Heart left ventricle (tissue), 16 donors: ENCODE measurements at regions of chr7 and their contacts with region 1.

Region 1: DNA sequence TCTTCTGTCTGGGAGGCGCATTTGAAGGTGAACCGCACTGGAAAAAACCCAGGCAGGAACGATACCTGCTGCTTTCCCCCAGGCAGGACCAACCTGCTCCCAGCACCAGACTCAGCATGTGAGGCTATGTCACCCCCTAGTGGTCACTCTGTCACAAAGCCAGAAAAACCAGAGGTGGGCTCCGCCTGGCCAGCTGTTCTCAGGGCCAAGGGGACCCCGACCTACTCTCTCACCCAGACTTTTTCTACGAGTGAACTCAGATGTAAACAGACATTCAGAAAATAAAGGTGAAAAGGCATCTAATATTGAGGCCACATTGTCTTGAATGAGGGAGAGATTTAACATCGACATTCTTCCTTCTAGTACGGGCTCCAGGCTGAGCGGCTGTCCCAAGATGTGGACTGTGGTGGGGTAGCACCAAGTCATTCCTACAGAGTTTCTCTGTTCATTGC is 117.3 kb downstream of the PRKAG2 start:
- DNase-seq: peak in 2 of 5 donors; percentile 60 to 67
- ATAC-seq: peak in 3 of 4 donors; percentile 51 to 55 (median 53)
- H3K4me3 ChIP-seq: no peak overlapping the region
- H3K27ac ChIP-seq: no peak overlapping the region
- H3K4me1 ChIP-seq: peaks cover 0 to 32% (median 15%) of the 10 kb centered on the region in 12 donors
- H3K27me3 ChIP-seq: no peaks in the 10 kb centered on the region
- CTCF ChIP-seq: peak; percentile 80 to 92 (median 88)
- POLR2A ChIP-seq: no peak

Region 2: GRCh38 chr7:151315038-151315655 is 444.5 kb before region 1 on chr7:
- intact Hi-C with region 1: loop called in 1 of 10 experiments (anchors 5 kb)
- DNase-seq: peak in 4 of 5 donors; percentile 62 to 74 (median 66)
- ATAC-seq: peak in 3 of 4 donors; percentile 53 to 84 (median 84)
- H3K4me3 ChIP-seq: peak overlapping the region in 1 of 12 donors; percentile 1
- H3K27ac ChIP-seq: no peak overlapping the region
- H3K4me1 ChIP-seq: peaks cover 0 to 15% (median 6%) of the 10 kb centered on the region in 12 donors
- H3K27me3 ChIP-seq: no peaks in the 10 kb centered on the region
- CTCF ChIP-seq: peak; percentile 73 to 92 (median 80)
- POLR2A ChIP-seq: no peak

Region 3: GRCh38 chr7:151459726-151460473 is 299.7 kb before region 1 on chr7:
- intact Hi-C with region 1: loop called in 5 of 10 experiments (anchors 5 to 10 kb)
- DNase-seq: peak; percentile 73 to 91 (median 78)
- ATAC-seq: peak; percentile 88 to 90 (median 90)
- H3K4me3 ChIP-seq: peak overlapping the region in 9 of 12 donors; percentile 20 to 40 (median 27)
- H3K27ac ChIP-seq: peak overlapping the region; percentile 65 to 97 (median 92)
- H3K4me1 ChIP-seq: peaks cover 3 to 34% (median 22%) of the 10 kb centered on the region in 12 donors
- H3K27me3 ChIP-seq: no peaks in the 10 kb centered on the region
- CTCF ChIP-seq: peak in 8 of 12 donors; percentile 5 to 50 (median 28)
- POLR2A ChIP-seq: peak in 1 of 2 donors; percentile 13

Region 4: GRCh38 chr7:151570366-151570915 is 189.2 kb before region 1 on chr7:
- intact Hi-C with region 1: loop called in 9 of 10 experiments (anchors 2 to 5 kb)
- DNase-seq: no peak
- ATAC-seq: no peak
- H3K4me3 ChIP-seq: no peak overlapping the region
- H3K27ac ChIP-seq: no peak overlapping the region
- H3K4me1 ChIP-seq: peaks cover 0 to 14% (median 6%) of the 10 kb centered on the region in 12 donors
- H3K27me3 ChIP-seq: no peaks in the 10 kb centered on the region
- CTCF ChIP-seq: peak in 11 of 12 donors; percentile 22 to 65 (median 44)
- POLR2A ChIP-seq: no peak

Region 5: GRCh38 chr7:151658778-151659177 is 100.8 kb before region 1 on chr7:
- intact Hi-C with region 1: no loop called
- DNase-seq: no peak
- ATAC-seq: no peak
- H3K4me3 ChIP-seq: no peak overlapping the region
- H3K27ac ChIP-seq: peak overlapping the region in 1 of 12 donors; percentile 8
- H3K4me1 ChIP-seq: peaks cover 0 to 7% (median 0%) of the 10 kb centered on the region in 12 donors
- H3K27me3 ChIP-seq: no peaks in the 10 kb centered on the region
- CTCF ChIP-seq: no peak
- POLR2A ChIP-seq: no peak

Region 6: GRCh38 chr7:151696721-151697514 is 62.7 kb before region 1 on chr7:
- intact Hi-C with region 1: loop called in 1 of 10 experiments (anchors 5 kb)
- DNase-seq: peak in 3 of 5 donors; percentile 47 to 68 (median 48)
- ATAC-seq: peak in 3 of 4 donors; percentile 4 to 23 (median 16)
- H3K4me3 ChIP-seq: no peak overlapping the region
- H3K27ac ChIP-seq: peak overlapping the region in 10 of 12 donors; percentile 48 to 93 (median 74)
- H3K4me1 ChIP-seq: peaks cover 0 to 78% (median 43%) of the 10 kb centered on the region in 12 donors
- H3K27me3 ChIP-seq: no peaks in the 10 kb centered on the region
- CTCF ChIP-seq: no peak
- POLR2A ChIP-seq: no peak

Region 7: DNA sequence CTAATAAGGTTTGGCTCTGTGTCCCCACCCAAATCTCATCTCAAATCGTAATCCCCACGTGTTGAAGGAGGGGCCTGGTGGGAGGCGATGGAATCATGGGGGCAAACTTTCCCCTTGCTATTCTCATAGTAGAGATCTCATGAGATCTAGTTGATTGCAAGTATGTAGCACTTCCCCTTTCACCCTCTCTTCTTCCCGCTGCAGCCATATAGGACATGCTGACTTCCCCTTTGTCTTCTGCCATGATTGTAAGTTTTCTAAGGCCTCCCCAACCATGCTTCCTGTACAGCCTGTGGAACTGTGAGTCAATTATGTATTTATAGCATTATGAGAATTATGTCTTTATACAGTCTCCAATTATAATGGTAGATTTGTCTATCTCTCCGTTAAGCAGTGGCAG is 1594.5 kb after region 1 on chr7:
- intact Hi-C with region 1: no loop called
- DNase-seq: no peak
- ATAC-seq: no peak
- H3K4me3 ChIP-seq: no peak overlapping the region
- H3K27ac ChIP-seq: no peak overlapping the region
- H3K4me1 ChIP-seq: no peaks in the 10 kb centered on the region
- H3K27me3 ChIP-seq: no peaks in the 10 kb centered on the region
- CTCF ChIP-seq: no peak
- POLR2A ChIP-seq: no peak